CD8-positive, alpha-beta memory T cell (primary cell): ENCODE measurements at regions of chr12 and their contacts with region 1.

Region 1: GRCh38 chr12:575948-576612 is 87.2 kb downstream of the NINJ2 start:
- DNase-seq: peak; percentile 76 to 82 (median 79)
- H3K4me3 ChIP-seq: peak overlapping the region; percentile 30
- H3K4me3 Mint-ChIP-seq: peak overlapping the region; percentile 38 to 85 (median 64)
- H3K27ac ChIP-seq: no peak overlapping the region
- H3K27ac Mint-ChIP-seq: peak overlapping the region in 5 of 8 donors; percentile 51 to 79 (median 68)
- H3K4me1 ChIP-seq: peaks cover 14% of the 10 kb centered on the region
- H3K4me1 Mint-ChIP-seq: peaks cover 13 to 21% (median 16%) of the 10 kb centered on the region in 3 donors
- H3K27me3 ChIP-seq: no peaks in the 10 kb centered on the region
- H3K27me3 Mint-ChIP-seq: peaks cover 0 to 2% of the 10 kb centered on the region in 2 donors

Region 2: GRCh38 chr12:614411-614970 is 38.4 kb after region 1 on chr12:
- CTCF ChIA-PET with region 1: interaction called, 13 read pairs
- POLR2A ChIA-PET with region 1: no interaction called
- DNase-seq: peak in 3 of 5 donors; percentile 2 to 56 (median 19)
- H3K4me3 ChIP-seq: no peak overlapping the region
- H3K4me3 Mint-ChIP-seq: no peak overlapping the region
- H3K27ac ChIP-seq: no peak overlapping the region
- H3K27ac Mint-ChIP-seq: peak overlapping the region in 1 of 8 donors; percentile 84
- H3K4me1 ChIP-seq: peaks cover 16% of the 10 kb centered on the region
- H3K4me1 Mint-ChIP-seq: peaks cover 23 to 32% (median 28%) of the 10 kb centered on the region in 3 donors
- H3K27me3 ChIP-seq: no peaks in the 10 kb centered on the region
- H3K27me3 Mint-ChIP-seq: no peaks in the 10 kb centered on the region

Region 3: DNA sequence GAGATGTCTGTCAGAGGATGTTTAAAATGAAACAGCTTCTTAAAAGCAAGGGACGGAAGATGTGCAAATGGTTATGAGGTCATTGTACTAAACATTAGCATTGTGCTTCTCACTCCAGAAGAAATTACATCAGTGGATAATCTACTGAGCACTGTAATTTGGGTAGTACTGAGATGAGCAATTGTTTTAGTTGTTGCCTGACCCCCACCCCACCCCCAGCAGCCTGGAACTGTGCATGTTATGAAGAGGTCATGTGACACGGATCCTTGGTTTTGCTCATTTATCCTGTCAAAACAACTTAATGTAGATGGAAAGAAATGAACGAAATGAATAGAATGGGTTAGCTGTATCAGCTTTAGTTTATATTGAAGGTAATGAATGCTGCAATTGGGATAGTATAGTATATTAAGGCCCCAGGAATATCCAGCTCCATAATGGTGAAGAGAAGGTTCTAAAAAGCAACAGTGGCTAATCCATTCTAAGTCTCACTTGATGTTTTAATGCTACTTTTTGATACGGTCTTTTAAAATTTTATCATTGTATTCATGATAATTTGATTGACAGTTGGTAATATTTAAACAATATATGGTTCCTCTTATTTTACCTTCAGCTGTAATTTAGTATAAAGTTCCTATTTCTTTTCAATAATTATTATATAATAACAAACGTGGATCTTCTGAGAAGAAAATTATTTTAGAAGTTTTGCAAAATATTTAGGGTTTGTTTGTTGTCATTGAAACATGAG is 234.8 kb after region 1 on chr12:
- CTCF ChIA-PET with region 1: interaction called, 56 read pairs
- POLR2A ChIA-PET with region 1: no interaction called
- DNase-seq: no peak
- H3K4me3 ChIP-seq: no peak overlapping the region
- H3K4me3 Mint-ChIP-seq: peak overlapping the region in 6 of 7 donors; percentile 25 to 67 (median 46)
- H3K27ac ChIP-seq: no peak overlapping the region
- H3K27ac Mint-ChIP-seq: peak overlapping the region; percentile 45 to 90 (median 74)
- H3K4me1 ChIP-seq: peaks cover 58% of the 10 kb centered on the region
- H3K4me1 Mint-ChIP-seq: peaks cover 66 to 83% (median 82%) of the 10 kb centered on the region in 3 donors
- H3K27me3 ChIP-seq: no peaks in the 10 kb centered on the region
- H3K27me3 Mint-ChIP-seq: no peaks in the 10 kb centered on the region

Region 4: DNA sequence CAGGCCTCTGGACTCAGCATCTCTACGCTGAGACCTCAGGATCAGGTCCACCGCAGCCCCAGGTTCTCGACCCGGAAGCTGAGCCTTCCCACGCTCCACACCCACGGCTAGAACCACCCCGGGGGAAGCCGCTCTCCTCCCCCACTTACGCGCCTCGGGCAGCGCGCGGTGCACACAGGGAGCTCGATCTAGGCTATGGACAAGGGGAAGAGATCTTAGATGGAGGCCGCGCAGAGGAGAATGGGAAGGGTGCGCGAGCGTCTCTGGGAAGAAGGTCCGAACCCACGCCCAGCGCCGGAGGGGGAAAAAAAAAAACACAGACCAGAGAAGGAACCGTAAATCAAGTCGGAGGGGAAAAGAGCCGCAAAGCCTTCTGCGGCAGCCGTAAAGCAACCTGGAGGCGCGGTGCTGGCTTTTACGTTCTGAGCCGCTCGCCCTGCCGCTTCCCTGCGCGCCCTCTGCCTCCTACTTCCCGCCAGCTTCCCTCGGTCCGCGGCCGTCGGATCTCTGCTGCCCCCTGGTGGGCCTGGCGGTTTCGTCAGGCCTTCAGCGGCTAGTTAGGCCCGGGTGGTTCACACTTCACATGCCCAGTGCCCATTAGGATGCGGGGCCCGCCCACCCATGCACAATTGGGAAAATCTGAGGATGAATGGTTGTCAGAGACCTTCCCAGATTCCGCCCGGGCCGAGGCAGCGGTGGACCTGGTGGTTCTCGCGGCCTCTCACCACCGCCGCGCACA is 373.5 kb after region 1 on chr12 and contains the start of gene RAD52:
- CTCF ChIA-PET with region 1: interaction called, 14 read pairs
- POLR2A ChIA-PET with region 1: no interaction called
- DNase-seq: peak; percentile 93 to 96 (median 95)
- H3K4me3 ChIP-seq: peak within 1 kb of the TSS; percentile 97
- H3K4me3 Mint-ChIP-seq: peak within 1 kb of the TSS; percentile 88 to 100 (median 98)
- H3K27ac ChIP-seq: peak within 1 kb of the TSS; percentile 83
- H3K27ac Mint-ChIP-seq: peak within 1 kb of the TSS; percentile 54 to 99 (median 94)
- H3K4me1 ChIP-seq: peaks cover 15% of the 10 kb centered on the region
- H3K4me1 Mint-ChIP-seq: peaks cover 26 to 34% (median 30%) of the 10 kb centered on the region in 3 donors
- H3K27me3 ChIP-seq: no peaks in the 10 kb centered on the region
- H3K27me3 Mint-ChIP-seq: peaks cover 0 to 3% of the 10 kb centered on the region in 2 donors
- total RNA-seq, gene RAD52: 13.2 to 13.8 TPM